Cardiac septum (tissue), 1 donor: ENCODE measurements at regions of chr1 and their contacts with region 1.

Region 1: GRCh38 chr1:89261926-89262515 is 10.6 kb downstream of the GBP5 start:
- DNase-seq: no peak

Region 2: DNA sequence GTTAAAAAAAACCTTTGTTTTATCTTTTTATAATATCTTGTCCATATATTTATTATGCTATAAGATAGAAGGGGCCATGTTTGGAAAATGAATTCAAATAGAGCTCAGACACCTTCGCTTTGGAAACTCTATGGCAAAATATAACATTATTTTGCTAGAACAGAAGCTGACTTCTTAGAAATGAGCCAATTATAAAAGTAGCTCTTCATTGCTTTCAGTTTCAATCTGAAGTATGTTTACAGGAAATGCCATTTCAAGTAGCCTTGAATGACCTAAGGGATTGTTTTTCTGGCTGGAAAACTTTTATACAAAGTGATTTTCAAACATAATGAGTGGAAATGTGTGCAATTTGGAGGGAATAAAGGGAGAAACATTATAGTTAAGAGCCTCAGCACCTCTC is 48.5 kb after region 1 on chr1:
- intact Hi-C with region 1: loop called (anchors 5 kb)
- DNase-seq: no peak